Naive thymus-derived CD4-positive, alpha-beta T cell (primary cell): ENCODE measurements at regions of chr10 and their contacts with region 1.

Region 1: DNA sequence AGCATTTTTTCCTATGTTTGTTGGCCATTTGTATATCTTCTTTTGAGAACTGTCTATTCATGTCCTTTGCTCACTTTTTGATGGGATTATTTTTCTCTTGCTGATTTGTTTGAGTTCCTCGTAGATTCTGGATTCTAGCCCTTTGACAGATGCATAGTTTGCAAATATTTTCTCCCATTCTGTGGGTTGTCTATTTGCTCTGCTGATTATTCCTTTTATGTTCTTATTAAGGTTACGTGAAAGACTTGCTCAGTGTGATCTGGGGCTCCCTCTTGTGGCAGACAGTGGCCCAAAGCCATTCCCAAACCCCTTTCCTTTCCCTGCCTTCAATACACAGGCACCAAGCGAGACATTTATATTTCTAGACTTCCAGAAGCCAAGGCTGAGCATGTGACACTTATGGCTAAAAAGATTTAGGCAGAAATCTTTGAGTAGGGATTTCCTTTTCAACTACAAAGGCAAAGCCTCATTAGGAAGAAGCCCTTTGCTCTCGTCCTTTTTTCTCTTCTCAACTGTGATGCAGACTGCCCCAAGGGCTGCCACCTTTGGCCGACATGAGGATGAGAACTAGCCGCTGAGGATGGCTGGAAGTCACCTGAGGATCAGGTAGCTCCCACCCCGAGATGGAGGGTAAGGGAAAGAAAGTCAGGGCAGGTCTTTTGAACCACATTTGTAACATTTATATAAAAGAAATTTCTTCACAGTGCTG is 23.6 kb downstream of the ST8SIA6 start:
- DNase-seq: peak in 8 of 9 donors; percentile 44 to 68 (median 60)
- ATAC-seq: peak; percentile 43
- H3K4me3 ChIP-seq: no peak overlapping the region
- H3K4me3 Mint-ChIP-seq: peak overlapping the region in 9 of 10 donors; percentile 11 to 81 (median 42)
- H3K27ac ChIP-seq: no peak overlapping the region
- H3K27ac Mint-ChIP-seq: peak overlapping the region in 8 of 9 donors; percentile 20 to 97 (median 90)
- H3K4me1 ChIP-seq: peaks cover 37 to 43% of the 10 kb centered on the region in 2 donors
- H3K4me1 Mint-ChIP-seq: peaks cover 43 to 58% (median 53%) of the 10 kb centered on the region in 7 donors
- H3K27me3 ChIP-seq: no peaks in the 10 kb centered on the region
- H3K27me3 Mint-ChIP-seq: peaks cover 0 to 24% (median 0%) of the 10 kb centered on the region in 5 donors

Region 2: DNA sequence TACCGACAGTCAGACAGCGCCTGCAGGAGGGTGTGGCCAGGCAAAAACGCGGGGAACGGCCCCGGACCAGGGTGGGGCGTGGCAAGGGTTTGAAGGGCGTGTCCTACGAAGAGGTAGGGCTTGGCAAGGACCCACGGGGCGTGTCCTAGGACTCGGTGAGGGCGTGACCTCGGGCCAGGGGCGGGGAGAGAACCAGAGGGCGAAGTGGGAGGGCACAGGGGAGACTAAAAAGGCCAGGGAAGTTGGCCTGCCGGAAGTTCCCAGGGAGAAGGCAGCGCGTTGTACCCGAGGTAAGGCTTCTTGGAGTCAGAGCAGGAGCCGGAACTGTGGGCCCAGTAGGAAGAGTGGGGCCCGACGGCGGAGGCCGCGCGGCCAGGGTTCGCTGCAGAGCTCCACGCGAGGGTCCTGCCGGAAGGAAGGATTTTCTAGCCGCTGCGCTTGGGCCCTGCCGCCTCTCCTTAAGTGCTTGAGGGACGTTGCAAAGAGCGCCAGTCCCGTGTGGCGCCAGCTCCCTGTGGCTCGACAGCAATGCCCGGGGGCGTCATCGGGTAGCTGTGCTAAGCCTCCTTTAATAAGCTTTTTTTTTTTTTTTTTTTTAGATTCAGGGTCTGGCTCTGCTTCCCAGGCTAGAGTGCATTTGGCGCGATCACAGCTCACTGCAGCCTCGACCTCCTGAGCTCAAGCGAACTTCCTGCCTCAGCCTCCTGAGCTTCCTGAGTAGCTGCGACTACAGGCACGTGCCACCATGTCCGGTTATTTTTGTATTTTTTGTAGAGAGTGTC is 993.9 kb before region 1 on chr10 and contains the start of gene PTER:
- CTCF ChIA-PET with region 1: no interaction called
- POLR2A ChIA-PET with region 1: no interaction called
- intact Hi-C with region 1: loop called in 1 of 2 experiments (anchors 5 kb)
- DNase-seq: peak; percentile 92 to 99 (median 94)
- ATAC-seq: peak; percentile 100
- H3K4me3 ChIP-seq: peak within 1 kb of the TSS; percentile 93
- H3K4me3 Mint-ChIP-seq: peak within 1 kb of the TSS; percentile 91 to 99 (median 96)
- H3K27ac ChIP-seq: peak within 1 kb of the TSS; percentile 77
- H3K27ac Mint-ChIP-seq: peak within 1 kb of the TSS; percentile 87 to 97 (median 94)
- H3K4me1 ChIP-seq: peaks cover 13 to 28% of the 10 kb centered on the region in 2 donors
- H3K4me1 Mint-ChIP-seq: peaks cover 36 to 57% (median 48%) of the 10 kb centered on the region in 7 donors
- H3K27me3 ChIP-seq: no peaks in the 10 kb centered on the region
- H3K27me3 Mint-ChIP-seq: peaks cover 0 to 19% (median 0%) of the 10 kb centered on the region in 5 donors
- total RNA-seq, gene PTER: 12.9 to 23.7 (median 15.3) TPM

Region 3: DNA sequence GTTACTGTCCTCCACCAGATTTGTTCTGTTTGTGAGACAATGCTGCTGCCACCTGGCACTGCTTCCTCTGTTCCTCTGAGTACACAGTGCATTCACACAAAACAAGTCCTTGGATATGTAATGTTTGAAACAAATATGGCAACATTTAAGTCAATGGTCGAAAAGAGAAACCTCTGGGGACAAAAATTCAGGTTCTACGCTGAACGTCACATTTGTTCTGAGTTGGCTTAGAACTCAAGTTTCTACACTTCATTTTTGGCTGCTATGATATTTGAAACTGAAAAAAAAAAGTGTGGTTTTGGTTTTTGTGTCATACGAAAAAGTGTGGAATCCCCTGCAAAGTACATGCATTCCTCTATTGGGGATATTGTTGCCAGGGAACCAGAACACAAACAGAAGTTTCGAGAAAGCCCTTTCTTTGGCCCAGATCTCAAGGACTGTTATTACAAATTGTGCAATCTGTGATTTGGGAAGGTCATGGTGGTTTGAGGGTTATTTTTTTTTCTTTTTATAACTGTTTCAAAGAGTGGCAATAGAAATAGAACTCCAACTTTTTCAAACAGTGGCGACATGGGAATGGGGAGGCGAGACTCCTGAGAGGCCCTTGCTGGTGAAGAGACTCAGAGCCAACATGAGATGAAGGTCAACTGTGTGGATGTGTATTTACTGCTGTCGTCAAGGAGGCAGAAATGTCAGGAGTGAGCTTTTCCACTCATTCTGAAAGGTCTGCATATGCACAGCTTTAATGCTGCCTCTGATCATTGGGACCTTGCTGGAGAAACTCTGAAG is 428.6 kb before region 1 on chr10:
- CTCF ChIA-PET with region 1: no interaction called
- POLR2A ChIA-PET with region 1: no interaction called
- intact Hi-C with region 1: loop called in 1 of 2 experiments (anchors 2 kb)
- DNase-seq: peak in 5 of 9 donors; percentile 25 to 79 (median 38)
- ATAC-seq: peak; percentile 59
- H3K4me3 ChIP-seq: no peak overlapping the region
- H3K4me3 Mint-ChIP-seq: peak overlapping the region in 9 of 10 donors; percentile 30 to 69 (median 63)
- H3K27ac ChIP-seq: peak overlapping the region; percentile 67
- H3K27ac Mint-ChIP-seq: peak overlapping the region; percentile 65 to 98 (median 85)
- H3K4me1 ChIP-seq: peaks cover 20 to 35% of the 10 kb centered on the region in 2 donors
- H3K4me1 Mint-ChIP-seq: peaks cover 21 to 79% (median 57%) of the 10 kb centered on the region in 7 donors
- H3K27me3 ChIP-seq: no peaks in the 10 kb centered on the region
- H3K27me3 Mint-ChIP-seq: peaks cover 0 to 66% (median 0%) of the 10 kb centered on the region in 5 donors

Region 4: GRCh38 chr10:17257466-17258321 is 173.1 kb before region 1 on chr10:
- CTCF ChIA-PET with region 1: interaction called, 7 read pairs
- POLR2A ChIA-PET with region 1: no interaction called
- intact Hi-C with region 1: loop called in 1 of 2 experiments (anchors 1 kb)
- DNase-seq: peak in 8 of 9 donors; percentile 15 to 71 (median 58)
- ATAC-seq: peak; percentile 88
- H3K4me3 ChIP-seq: no peak overlapping the region
- H3K4me3 Mint-ChIP-seq: peak overlapping the region in 3 of 10 donors; percentile 39 to 55 (median 51)
- H3K27ac ChIP-seq: no peak overlapping the region
- H3K27ac Mint-ChIP-seq: peak overlapping the region in 1 of 9 donors; percentile 38
- H3K4me1 ChIP-seq: no peaks in the 10 kb centered on the region
- H3K4me1 Mint-ChIP-seq: peaks cover 5 to 13% (median 6%) of the 10 kb centered on the region in 7 donors
- H3K27me3 ChIP-seq: no peaks in the 10 kb centered on the region
- H3K27me3 Mint-ChIP-seq: no peaks in the 10 kb centered on the region

Region 5: DNA sequence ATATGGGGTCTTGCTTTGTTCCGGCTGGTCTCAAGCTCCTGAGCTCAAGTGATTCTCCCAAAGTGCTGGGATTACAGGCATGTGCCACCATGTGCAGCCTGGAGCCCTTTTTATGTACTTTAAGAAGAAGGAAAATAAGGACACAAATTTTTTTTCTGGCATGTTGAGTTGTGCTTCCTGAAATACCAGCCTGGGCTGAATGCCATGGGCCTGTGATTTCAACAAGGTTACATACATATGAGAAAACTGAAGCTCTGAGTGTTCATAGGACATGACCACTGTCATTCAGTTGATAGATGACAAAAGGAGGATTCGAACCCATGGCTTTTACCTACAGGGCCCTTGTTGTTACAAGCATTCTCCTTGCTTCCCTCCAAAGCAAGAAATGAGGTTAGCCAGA is 12.6 kb before region 1 on chr10:
- CTCF ChIA-PET with region 1: interaction called, 178 read pairs
- POLR2A ChIA-PET with region 1: interaction called, 200 read pairs
- intact Hi-C with region 1: no loop called
- DNase-seq: no peak
- ATAC-seq: no peak
- H3K4me3 ChIP-seq: no peak overlapping the region
- H3K4me3 Mint-ChIP-seq: peak overlapping the region in 1 of 10 donors; percentile 7
- H3K27ac ChIP-seq: no peak overlapping the region
- H3K27ac Mint-ChIP-seq: peak overlapping the region in 2 of 9 donors; percentile 44 to 72
- H3K4me1 ChIP-seq: peaks cover 0 to 16% of the 10 kb centered on the region in 2 donors
- H3K4me1 Mint-ChIP-seq: peaks cover 10 to 55% (median 47%) of the 10 kb centered on the region in 7 donors
- H3K27me3 ChIP-seq: no peaks in the 10 kb centered on the region
- H3K27me3 Mint-ChIP-seq: peaks cover 0 to 28% (median 0%) of the 10 kb centered on the region in 5 donors